Tibial artery (tissue), 4 donors: ENCODE measurements at regions of chr1 and their contacts with region 1.

Region 1: DNA sequence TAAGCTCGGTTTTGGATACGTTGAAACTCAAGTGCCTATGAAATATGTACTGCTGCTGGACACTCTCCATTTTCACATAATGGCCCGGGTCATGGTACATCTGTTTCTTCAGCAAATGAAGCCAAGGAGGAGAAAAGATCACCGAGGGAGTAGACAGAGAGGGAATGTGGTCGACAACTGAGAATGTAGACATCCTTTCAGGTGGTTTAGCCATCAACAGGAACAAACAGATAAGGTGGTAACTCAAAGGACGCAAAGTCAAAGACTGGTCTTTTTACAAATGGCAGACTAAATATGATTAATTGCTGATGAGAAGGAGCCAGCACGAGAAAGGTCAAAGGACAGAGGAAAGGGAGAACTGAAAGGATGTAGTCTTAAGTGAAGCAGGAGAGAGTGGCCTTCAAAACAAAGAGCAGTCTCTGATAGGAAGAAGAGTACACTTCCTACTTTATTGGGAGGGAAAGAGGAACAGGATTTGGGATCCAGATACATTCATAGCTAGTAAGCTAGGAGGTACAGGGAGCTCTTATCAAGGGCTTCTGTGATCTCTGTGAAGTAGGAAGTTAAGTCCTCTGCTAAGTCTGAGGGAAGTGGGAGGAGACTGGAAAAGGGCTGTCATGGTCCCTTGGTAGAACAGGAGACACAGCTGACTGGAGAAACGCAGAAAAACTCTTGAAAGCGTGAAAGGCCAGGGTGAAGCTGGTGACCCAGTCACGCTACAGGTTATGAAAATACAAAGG is 28.3 kb downstream of the NUP133 start:
- DNase-seq: no peak
- H3K4me3 ChIP-seq: no peak overlapping the region
- H3K27ac ChIP-seq: no peak overlapping the region
- H3K4me1 ChIP-seq: no peaks in the 10 kb centered on the region
- H3K27me3 ChIP-seq: no peaks in the 10 kb centered on the region
- CTCF ChIP-seq: no peak

Region 2: GRCh38 chr1:229258031-229258756 is 221.6 kb before region 1 on chr1:
- intact Hi-C with region 1: loop called (anchors 2 kb)
- DNase-seq: peak in 1 of 2 donors; percentile 49
- H3K4me3 ChIP-seq: no peak overlapping the region
- H3K27ac ChIP-seq: no peak overlapping the region
- H3K4me1 ChIP-seq: no peaks in the 10 kb centered on the region
- H3K27me3 ChIP-seq: no peaks in the 10 kb centered on the region
- CTCF ChIP-seq: peak; percentile 80 to 90